Psoas muscle (tissue), 8 donors: ENCODE measurements at regions of chr2 and their contacts with region 1.

Region 1: DNA sequence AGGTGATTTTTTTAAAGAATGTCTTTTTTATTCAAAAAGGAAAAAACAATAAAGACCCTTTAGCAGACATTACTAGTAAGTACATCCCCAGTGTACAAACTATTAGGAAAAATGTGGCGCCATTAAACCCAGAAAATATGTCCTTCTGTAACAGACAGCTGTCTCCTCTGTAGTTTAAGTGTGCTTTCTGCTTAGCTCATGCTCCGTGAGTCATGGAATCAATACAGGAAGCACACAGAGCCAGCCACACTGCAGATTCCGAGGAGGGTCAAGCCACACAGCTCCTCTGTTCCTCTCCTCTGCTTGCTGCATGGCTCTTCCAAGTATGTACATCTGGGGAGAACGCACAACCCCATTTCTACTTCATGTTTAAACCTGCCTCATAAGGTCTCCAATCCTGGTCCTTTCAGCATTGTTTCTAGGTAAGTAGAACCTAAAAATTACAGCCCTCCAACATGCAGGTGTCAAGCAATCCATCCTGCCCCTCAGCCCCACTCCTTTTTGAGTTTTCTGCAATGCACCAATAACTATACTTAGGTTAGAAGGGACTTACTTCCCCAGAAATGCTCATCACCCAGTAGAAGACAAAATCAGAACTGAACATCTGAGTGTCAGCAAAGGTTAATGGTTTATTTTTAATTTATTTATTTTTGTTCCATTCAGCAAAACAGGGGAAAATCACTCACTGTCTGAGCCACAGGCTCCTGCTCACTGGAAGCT is 37.5 kb downstream of the ACVR1 start:
- DNase-seq: peak; percentile 50 to 72
- ATAC-seq: peak; percentile 88 to 92 (median 89)
- H3K4me3 ChIP-seq: peak overlapping the region; percentile 61
- H3K27ac ChIP-seq: peak overlapping the region; percentile 94
- H3K4me1 ChIP-seq: peaks cover 76% of the 10 kb centered on the region
- H3K27me3 ChIP-seq: no peaks in the 10 kb centered on the region
- CTCF ChIP-seq: no peak

Region 2: GRCh38 chr2:157657101-157657500 is 181.5 kb before region 1 on chr2:
- intact Hi-C with region 1: no loop called
- DNase-seq: no peak
- ATAC-seq: no peak
- H3K4me3 ChIP-seq: no peak overlapping the region
- H3K27ac ChIP-seq: no peak overlapping the region
- H3K4me1 ChIP-seq: no peaks in the 10 kb centered on the region
- H3K27me3 ChIP-seq: no peaks in the 10 kb centered on the region
- CTCF ChIP-seq: no peak

Region 3: DNA sequence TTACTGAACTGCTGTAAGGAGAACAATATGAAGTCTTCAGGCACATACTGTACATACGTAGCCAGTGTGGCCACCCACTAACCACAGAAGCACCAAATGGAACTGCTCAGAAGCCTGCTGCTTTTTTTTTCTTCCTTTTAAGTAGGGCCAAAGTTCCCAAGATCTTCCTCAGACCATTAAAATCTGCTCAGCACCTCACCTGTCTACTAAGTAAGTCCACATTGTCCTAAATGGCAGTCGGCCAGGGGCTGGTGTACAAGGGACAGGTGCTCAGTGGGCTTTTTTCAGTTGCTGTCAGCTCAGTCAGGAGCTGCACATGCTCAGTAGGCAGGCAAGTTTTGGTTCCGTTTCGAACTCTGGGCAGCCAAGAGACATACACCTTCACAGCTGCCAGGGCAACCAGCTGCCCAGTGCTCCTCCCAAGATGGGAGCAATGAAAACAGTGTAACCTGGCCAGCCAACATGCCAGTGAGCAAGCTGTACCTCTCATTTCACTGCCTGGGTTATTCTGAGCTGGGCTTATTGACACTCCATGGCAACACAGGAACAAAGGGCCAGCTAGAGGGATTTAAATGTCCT is 48.6 kb before region 1 on chr2:
- intact Hi-C with region 1: loop called (anchors 2 to 5 kb)
- DNase-seq: peak; percentile 55 to 85
- ATAC-seq: peak; percentile 90 to 93 (median 92)
- H3K4me3 ChIP-seq: peak overlapping the region; percentile 29
- H3K27ac ChIP-seq: peak overlapping the region; percentile 92
- H3K4me1 ChIP-seq: peaks cover 85% of the 10 kb centered on the region
- H3K27me3 ChIP-seq: no peaks in the 10 kb centered on the region
- CTCF ChIP-seq: no peak